Right cardiac atrium (tissue), 5 donors: ENCODE measurements at regions of chr17 and their contacts with region 1.

Region 1: GRCh38 chr17:45135192-45135977 is at the start of gene ACBD4:
- DNase-seq: peak; percentile 95 to 98 (median 97)
- ATAC-seq: peak; percentile 83 to 84
- H3K4me3 ChIP-seq: peak within 1 kb of the TSS; percentile 49
- H3K27ac ChIP-seq: peak within 1 kb of the TSS; percentile 54
- H3K4me1 ChIP-seq: no peaks in the 10 kb centered on the region
- H3K27me3 ChIP-seq: no peaks in the 10 kb centered on the region
- total RNA-seq, gene ACBD4: 11.9 to 14.8 (median 12.6) TPM

Region 2: DNA sequence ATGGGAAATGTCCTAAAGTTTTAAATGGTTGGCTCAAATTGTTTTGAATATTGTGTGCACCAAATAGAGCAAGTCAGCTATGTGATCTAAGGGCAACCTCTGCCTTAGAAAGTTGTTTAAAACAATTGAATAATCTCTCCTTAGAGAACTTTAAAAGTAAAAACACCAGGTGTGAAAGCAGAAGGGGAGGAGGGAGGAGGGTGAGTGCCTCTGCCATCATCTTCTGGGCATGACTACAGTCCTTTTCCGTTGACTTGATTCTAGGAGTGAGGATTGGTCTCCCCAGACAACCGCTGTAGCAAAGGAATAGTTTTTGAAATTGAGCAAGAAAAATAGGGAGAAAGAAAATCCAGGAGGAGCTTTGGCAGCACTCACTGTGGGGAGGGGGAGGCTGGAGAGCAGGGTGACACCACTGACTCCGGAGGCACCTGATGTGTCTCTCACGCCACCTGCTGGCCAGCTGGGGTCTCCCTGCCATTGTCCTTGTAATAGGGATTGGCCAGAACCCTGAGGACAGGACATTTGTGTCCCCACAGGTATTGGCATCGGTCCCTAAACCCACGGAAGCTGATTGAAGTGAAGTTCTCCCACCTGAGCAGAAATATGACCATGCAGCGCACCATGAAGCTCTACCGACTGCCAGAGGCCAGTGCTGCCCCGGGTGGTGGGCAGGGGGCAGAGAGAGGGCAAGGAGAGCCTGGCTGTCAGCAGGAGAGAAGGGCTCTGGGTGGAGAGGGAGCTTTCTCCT is 36.3 kb before region 1 on chr17:
- intact Hi-C with region 1: loop called in 3 of 4 experiments (anchors 5 kb)
- DNase-seq: peak; percentile 86 to 96 (median 95)
- ATAC-seq: peak; percentile 77 to 84
- H3K4me3 ChIP-seq: no peak overlapping the region
- H3K27ac ChIP-seq: no peak overlapping the region
- H3K4me1 ChIP-seq: peaks cover 4% of the 10 kb centered on the region
- H3K27me3 ChIP-seq: no peaks in the 10 kb centered on the region

Region 3: DNA sequence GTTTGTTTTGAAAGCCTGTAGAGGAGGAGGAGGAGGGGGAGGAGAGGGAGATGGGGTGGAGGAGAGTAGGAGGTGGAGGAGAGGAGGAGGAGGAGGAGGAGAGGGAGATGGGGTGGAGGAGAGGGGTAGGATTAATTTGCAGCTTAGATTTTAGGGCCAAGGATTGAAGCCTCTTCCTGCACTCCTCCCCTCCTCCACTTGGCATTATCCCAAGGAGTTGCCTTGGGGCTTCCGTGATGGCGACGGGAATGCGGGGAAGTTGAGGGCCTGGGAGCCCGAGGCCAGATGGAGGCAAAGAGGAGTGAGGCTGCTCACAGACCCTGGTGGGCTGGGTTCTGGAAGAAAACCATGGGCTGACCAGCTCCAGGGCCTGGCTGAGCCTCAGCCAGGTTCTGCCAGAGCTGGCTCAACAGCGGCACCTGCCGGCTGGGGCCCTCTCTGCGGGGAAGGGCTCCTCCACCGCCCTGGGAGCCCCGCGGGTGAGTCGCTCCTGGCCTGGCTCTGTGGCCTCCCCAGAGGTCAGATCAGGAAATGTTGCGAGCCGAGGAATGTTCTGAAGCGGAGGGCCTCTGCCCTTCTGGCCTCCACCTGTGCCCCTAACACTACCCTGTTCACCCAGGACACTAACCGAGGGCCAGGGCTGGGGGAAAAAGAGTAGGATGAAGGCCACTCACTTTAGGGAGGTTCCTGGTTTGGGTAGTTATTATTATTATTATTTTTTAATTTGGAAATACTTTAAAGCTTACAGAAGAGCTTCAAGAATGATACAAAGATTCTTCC is 62.4 kb after region 1 on chr17:
- intact Hi-C with region 1: loop called in 3 of 4 experiments (anchors 1 to 2 kb)
- DNase-seq: peak; percentile 93 to 97 (median 96)
- ATAC-seq: peak; percentile 97
- H3K4me3 ChIP-seq: no peak overlapping the region
- H3K27ac ChIP-seq: no peak overlapping the region
- H3K4me1 ChIP-seq: peaks cover 3% of the 10 kb centered on the region
- H3K27me3 ChIP-seq: no peaks in the 10 kb centered on the region